Motor neuron (in vitro differentiated cells): ENCODE measurements at regions of chr6 and their contacts with region 1.

Region 1: DNA sequence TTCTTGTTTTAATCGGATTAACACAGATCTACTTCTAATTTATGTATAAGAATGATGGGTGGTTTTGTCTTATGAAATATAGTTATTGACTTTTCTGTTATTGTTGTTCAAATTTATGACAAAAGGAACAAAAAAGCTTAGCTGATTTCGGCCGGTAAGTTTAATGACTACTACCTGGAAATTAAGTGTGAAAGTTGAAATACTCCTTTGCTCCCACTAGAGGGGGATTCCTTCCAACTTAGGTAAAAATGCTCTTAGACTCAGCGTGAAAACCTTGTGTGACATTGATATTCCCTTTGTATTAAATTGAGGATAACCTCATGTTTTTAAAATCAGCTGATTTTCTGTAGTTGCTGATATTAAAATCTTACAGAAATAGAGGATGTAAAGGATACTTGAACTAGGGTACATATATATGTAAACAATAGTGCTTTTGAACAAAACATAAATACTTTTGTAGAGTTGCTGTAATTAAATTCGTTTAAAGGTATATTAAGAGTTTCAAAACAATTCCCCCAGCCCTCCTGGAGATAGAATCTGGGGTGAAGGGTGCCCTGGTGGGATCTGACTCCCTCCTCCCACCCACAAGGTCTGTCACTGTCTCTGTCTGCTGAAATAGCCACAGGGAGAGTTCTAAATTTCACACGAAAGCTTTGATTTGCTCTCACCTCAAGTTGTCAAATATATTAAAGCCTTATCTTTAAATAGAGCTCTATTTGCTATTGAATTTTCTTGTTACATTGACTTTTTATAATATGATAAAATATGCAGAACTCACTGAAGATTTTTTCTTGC is 257.5 kb downstream of the ARID1B start:
- ATAC-seq: peak in 3 of 8 experiments; percentile 9 to 32 (median 29)
- H3K4me3 ChIP-seq: no peak overlapping the region
- H3K27ac ChIP-seq: no peak overlapping the region
- H3K4me1 ChIP-seq: peaks cover 32 to 42% of the 10 kb centered on the region in 2 donors

Region 2: DNA sequence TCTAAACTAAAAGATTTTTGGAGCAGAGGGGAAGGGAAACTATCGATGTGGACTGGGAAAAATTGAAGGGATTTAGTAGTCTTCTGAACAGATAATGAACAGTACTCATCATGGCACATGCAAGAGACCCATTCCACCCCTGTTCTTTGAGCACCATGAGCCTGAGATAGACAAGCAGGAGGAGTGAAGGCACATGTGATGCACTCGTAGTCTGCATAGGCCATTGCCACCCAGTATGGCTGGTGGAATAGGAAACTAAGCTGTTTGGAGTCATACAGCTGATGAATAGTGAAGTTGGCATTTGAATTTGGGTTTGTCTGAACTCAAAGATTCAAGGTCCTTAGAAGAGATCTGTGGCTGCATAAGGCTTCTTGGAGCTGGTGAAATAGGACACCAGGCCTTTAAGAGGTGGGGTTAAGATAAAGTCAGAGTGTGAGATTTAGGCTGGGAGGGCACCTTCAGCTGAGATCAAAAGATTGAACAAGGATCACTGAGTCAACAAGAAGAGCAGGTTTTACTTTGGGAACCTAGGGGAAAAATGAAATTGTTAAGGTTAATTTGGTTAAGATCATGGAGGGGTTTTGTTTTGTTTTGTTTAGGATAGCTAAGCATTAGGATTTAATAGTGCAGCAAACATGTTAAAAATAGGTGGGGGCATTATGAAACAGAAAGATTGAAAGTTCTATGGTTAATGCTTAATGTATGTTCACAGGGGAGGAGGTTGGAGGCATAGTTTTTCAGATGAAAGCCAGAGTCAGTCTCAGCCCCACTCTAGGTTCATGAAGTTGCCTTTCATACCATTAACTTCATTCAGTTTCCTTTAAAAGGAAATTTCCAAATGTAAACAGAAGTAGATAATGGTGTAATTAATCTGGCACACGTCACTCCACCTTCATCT is 108.7 kb before region 1 on chr6:
- in situ Hi-C with region 1: no loop called
- ATAC-seq: peak in 3 of 8 experiments; percentile 31 to 69 (median 61)
- H3K4me3 ChIP-seq: no peak overlapping the region
- H3K27ac ChIP-seq: no peak overlapping the region
- H3K4me1 ChIP-seq: no peaks in the 10 kb centered on the region

Region 3: GRCh38 chr6:157184202-157185020 is 149.8 kb after region 1 on chr6:
- in situ Hi-C with region 1: loop called in 2 of 9 experiments (anchors 25 kb)
- ATAC-seq: peak in 4 of 8 experiments; percentile 24 to 95 (median 90)
- H3K4me3 ChIP-seq: no peak overlapping the region
- H3K27ac ChIP-seq: no peak overlapping the region
- H3K4me1 ChIP-seq: peaks cover 28 to 41% of the 10 kb centered on the region in 2 donors

Region 4: DNA sequence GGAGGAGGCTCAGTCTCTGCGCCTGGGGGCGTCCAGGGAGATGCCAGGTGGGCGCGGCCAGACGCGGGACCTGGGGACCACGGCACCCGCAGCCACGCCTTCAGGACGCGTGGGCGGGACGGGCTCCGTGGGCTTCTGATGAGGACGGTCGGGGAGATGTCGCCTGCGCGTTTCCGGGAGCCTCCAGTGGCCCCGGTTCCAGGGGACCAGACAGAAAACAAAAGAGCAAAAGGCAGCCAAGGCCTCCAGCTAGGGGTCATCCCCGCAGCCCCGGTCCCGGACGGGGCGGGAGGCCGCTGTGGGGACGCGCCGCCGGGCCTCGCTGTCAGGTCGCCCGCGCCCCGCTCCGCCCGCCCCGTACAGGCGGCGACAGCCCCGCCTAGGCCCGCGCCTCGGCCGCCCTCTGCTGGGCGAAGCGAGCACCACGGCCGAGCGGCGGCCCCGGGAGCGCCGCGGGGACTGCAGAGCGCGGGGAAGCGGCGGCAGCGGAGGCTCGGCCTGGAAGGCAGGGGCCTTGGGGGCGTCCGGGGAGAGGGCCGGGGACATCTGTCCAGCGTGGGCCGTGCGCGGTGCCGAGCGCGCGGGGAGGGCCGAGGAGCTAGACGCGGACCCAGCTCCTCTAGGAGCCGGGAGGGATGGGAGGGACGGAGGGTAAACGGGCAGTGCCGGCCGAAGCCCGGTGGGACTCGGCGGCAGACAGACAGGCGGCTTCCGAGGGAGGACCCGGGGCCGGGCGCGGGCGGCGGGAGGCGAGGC is 240.0 kb after region 1 on chr6:
- in situ Hi-C with region 1: loop called in 1 of 9 experiments (anchors 25 kb)
- ATAC-seq: peak; percentile 93 to 98 (median 97)
- H3K4me3 ChIP-seq: peak overlapping the region; percentile 33 to 42 (median 37)
- H3K27ac ChIP-seq: peak overlapping the region in 1 of 2 donors; percentile 18
- H3K4me1 ChIP-seq: peaks cover 4 to 5% of the 10 kb centered on the region in 2 donors